ENCODE measurements at regions of chr5 and their contacts with region 1.

Region 1: DNA sequence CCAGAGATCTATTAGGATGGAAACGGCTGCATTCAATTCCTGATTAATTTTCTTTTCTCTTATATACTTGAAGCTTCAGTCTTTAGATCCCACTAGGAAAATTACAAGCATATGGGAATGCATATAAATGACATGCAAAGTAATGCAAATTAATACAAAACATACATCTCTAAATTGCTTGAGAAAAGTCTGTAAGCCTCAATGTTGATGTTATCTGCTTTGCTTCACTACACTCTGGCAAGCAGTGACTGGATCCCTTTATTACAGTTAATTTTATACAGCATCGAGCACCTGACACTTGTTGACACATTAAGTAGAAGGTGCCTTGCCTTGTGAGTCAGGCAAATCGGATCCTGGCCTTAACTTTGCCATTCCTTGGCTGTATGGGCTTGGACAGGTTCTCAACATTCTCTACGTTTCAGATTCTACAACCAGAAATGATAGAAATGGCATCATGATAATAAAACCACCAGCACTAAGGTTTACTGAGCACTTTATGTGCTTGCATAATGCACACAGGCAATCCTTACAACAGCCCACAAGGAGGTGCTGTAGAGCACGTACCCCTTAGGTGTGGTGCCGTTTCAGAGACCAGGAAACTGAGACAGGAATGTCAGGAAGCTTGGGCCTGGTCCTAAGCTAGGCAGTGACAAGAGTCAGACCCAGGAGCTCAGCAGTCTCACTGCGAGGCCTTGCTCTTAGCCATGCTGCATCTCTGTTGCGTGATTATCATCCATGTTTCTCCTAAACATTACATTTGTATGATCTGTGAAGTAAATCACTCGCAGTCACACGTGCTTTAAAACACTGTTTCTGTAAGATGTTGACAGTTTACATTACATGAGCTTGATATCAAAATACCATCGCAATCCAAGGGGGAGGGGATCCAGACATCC is 2.7 kb downstream of the GCNT4 start:
- DNase-seq: peak; percentile 56
- H3K4me3 ChIP-seq: no peak overlapping the region
- H3K27ac ChIP-seq: no peak overlapping the region
- H3K4me1 ChIP-seq: peaks cover 0 to 5% of the 10 kb centered on the region in 2 experiments; a peak in 1 of 4 replicates
- H3K27me3 ChIP-seq: no peaks in the 10 kb centered on the region
- CTCF ChIP-seq: peak; percentile 75
- EP300 ChIP-seq: no peak
- RAD21 ChIP-seq: peak; percentile 61

Region 2: GRCh38 chr5:75028090-75028489 is 21.6 kb before region 1 on chr5:
- CTCF ChIA-PET with region 1: interaction called, 10 read pairs
- POLR2A ChIA-PET with region 1: no interaction called
- DNase-seq: no peak
- H3K4me3 ChIP-seq: no peak overlapping the region
- H3K27ac ChIP-seq: no peak overlapping the region
- H3K4me1 ChIP-seq: no peaks in the 10 kb centered on the region
- H3K27me3 ChIP-seq: no peaks in the 10 kb centered on the region
- CTCF ChIP-seq: no peak
- EP300 ChIP-seq: no peak
- RAD21 ChIP-seq: no peak

Region 3: GRCh38 chr5:75072066-75072465 is 22.4 kb after region 1 on chr5:
- CTCF ChIA-PET with region 1: interaction called, 11 read pairs
- POLR2A ChIA-PET with region 1: no interaction called
- DNase-seq: no peak
- H3K4me3 ChIP-seq: no peak overlapping the region
- H3K27ac ChIP-seq: no peak overlapping the region
- H3K4me1 ChIP-seq: no peaks in the 10 kb centered on the region
- H3K27me3 ChIP-seq: no peaks in the 10 kb centered on the region; the same call in 1 of the 2 replicates
- CTCF ChIP-seq: no peak
- EP300 ChIP-seq: no peak
- RAD21 ChIP-seq: no peak